ENCODE measurements at regions of chr19 and their contacts with region 1.

Region 1: DNA sequence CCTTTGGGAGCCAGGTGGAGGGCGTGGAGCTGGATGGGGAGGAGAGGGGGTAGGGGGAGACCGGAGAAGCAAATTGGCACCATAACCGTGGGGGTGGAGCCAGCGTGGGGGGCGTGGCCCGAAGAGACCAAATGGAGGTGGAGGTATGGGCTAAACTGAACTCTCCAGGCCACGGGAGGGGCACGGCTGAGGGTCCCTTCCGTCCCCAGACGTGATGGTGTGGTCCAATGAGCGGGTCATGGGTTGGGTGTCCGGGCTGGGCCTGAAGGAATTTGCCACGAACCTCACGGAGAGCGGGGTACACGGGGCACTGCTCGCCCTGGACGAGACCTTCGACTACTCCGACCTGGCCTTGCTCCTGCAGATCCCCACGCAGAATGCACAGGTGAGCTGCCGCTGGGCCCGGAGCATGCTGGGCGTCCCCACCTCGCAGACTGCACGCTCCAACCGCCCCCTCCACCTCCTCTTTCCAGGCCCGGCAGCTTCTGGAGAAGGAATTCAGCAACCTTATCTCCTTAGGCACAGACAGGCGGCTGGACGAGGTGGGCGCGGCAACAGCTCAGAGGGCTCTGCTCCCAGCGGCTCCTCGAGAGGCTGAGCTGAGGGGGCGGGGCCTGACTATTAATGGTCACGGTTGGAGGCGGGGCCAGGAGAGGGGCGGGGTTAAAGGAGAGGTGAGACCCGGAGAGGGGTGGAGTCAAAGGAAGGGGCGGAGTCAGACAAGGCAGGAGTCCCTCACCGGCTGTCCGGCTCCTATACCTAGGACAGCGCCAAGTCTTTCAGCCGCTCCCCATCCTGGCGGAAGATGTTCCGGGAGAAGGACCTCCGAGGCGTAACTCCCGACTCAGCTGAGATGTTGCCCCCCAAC is 6.2 kb downstream of the HRC start:
- H3K4me3 ChIP-seq: peak overlapping the region; percentile 69
- H3K27ac ChIP-seq: peak overlapping the region; percentile 70
- H3K4me1 ChIP-seq: peaks cover 6% of the 10 kb centered on the region
- CTCF ChIP-seq: no peak

Region 2: DNA sequence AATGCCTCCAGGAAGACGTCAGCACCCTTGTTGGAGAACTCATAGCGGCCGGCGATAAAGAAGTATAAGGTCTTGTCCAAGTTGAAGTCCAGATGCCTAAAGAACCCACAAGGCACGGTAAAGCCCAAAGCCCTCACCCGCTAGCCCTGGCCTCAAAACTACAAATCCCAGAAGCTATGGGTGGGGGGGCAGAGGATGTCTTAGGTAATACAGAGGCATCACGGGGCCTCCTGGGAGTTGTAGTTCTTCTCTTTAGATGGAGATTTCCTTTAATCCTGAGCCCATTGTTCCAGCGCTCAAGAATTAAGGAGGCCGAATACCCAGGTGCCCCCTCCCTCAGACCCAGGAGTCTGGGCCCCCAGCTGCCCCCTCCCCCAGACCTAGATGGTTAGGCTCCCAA is 166.7 kb before region 1 on chr19:
- CTCF ChIA-PET with region 1: no interaction called
- POLR2A ChIA-PET with region 1: no interaction called
- H3K4me3 ChIP-seq: no peak overlapping the region
- H3K27ac ChIP-seq: no peak overlapping the region
- H3K4me1 ChIP-seq: no peaks in the 10 kb centered on the region
- CTCF ChIP-seq: no peak

Region 3: DNA sequence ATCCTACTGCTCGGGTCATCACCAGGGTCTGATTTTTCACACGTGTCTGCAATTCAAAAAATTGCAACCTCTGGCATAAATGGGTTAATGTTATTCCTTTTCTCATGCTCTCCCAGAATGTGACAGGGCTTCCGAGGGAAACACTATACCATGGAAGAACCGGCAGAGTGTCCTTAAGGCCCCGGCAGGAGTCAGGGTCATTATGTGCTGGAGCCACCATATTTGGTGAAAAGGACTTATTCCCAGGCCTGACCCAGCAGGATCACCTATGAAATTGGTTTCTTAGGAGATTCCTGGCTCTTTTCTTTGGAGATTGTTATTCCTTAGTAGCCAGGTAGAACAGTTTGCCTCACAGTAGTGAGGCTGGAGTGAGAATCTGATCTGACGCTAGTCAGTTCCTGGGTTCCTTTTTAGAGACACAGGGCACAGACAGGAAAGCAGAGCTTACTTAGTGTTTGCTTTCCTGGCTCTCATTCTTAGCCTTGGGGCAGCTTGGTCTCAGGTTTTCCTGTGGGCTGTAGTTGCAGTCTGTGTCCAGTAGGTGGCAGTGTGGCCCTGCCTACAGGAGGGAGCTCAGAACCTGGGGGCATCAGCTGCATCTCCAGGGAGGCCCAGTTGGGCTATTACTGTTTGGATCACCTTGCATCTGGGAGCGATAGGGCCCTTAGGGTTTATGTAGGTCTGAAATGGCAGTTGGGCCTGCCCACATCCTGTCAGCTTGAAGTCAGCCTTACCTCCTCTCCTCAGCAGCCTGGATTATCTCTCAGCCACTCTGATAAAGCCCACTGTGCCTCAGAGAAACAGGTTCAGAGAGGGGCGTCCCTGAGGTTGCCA is 51.3 kb before region 1 on chr19:
- CTCF ChIA-PET with region 1: interaction called, 66 read pairs
- POLR2A ChIA-PET with region 1: interaction called, 11 read pairs
- H3K4me3 ChIP-seq: no peak overlapping the region
- H3K27ac ChIP-seq: peak overlapping the region; percentile 48
- H3K4me1 ChIP-seq: peaks cover 8% of the 10 kb centered on the region
- CTCF ChIP-seq: peak; percentile 94

Region 4: GRCh38 chr19:49113762-49114629 is 35.0 kb before region 1 on chr19 and contains the start of gene LIN7B:
- CTCF ChIA-PET with region 1: interaction called, 7 read pairs
- POLR2A ChIA-PET with region 1: interaction called, 22 read pairs
- H3K4me3 ChIP-seq: peak within 1 kb of the TSS; percentile 69
- H3K27ac ChIP-seq: peak within 1 kb of the TSS; percentile 84
- H3K4me1 ChIP-seq: peaks cover 14% of the 10 kb centered on the region
- CTCF ChIP-seq: peak; percentile 31; the same call in 1 of the 2 replicates

Region 5: DNA sequence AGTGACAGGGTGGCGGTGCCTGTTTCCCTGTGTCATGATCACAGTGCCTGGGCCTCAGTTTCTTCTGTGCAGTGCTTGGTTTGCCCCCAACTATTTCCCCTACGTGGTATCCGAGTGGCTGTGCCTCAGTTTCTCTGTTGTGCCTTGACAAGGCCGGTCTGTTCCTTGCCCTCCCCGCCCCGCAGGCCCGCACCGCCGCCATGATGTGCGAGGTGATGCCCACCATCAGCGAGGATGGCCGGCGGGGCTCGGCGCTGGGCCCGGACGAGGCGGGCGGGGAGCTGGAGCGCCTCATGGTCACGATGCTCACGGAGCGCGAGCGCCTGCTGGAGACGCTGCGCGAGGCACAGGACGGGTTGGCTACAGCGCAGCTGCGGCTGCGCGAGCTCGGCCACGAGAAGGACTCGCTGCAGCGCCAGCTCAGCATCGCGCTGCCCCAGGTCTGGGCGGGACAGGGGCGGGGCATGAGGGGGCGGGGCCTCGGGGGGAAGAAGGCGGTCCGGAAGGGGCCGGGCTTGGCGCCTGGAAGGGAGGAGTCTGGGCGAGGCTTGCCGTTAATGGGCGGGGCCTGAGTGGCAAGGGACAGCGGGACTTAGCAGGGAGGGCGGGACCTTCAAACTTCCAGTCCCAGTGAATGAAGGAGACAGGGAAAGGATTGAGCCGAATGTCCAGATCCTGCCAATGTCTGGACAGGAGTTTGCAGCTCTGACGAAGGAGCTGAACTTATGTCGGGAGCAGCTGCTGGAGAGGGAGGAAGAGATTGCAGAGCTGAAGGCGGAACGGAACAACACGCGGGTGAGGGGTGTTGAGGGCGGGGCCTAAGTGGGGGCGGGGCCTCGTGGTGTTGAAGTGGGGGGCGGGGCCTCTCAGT is 21.1 kb before region 1 on chr19:
- CTCF ChIA-PET with region 1: interaction called, 20 read pairs
- POLR2A ChIA-PET with region 1: interaction called, 27 read pairs
- H3K4me3 ChIP-seq: peak overlapping the region; percentile 53
- H3K27ac ChIP-seq: peak overlapping the region; percentile 60; the same call in 1 of the 2 replicates
- H3K4me1 ChIP-seq: peaks cover 7% of the 10 kb centered on the region
- CTCF ChIP-seq: peak; percentile 85

Region 6: GRCh38 chr19:49210108-49210900 is 61.3 kb after region 1 on chr19:
- CTCF ChIA-PET with region 1: interaction called, 11 read pairs
- POLR2A ChIA-PET with region 1: interaction called, 4 read pairs
- H3K4me3 ChIP-seq: no peak overlapping the region
- H3K27ac ChIP-seq: no peak overlapping the region
- H3K4me1 ChIP-seq: peaks cover 6% of the 10 kb centered on the region; the same call in 1 of the 2 replicates
- CTCF ChIP-seq: no peak

Region 7: DNA sequence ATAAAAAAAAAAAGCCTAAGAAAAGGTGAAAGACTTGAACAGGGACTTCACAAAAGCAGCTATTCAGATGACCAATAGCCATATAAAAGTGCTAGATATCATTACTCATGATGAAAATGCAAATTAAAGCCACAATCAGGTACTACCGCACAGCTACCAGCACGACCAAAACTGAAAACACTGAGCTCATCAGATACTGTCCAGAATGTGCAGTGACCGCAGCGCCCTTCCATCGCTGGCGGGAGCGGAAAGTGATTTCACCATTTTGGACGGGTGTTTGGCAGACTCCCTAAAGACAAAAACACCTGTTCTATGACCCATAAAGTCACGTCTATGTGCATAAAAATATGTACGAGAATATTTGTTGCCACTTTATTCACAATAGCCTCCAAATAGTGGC is 115.2 kb after region 1 on chr19:
- CTCF ChIA-PET with region 1: no interaction called
- POLR2A ChIA-PET with region 1: no interaction called
- H3K4me3 ChIP-seq: no peak overlapping the region
- H3K27ac ChIP-seq: no peak overlapping the region
- H3K4me1 ChIP-seq: no peaks in the 10 kb centered on the region
- CTCF ChIP-seq: no peak

Region 8: GRCh38 chr19:49324801-49325576 is 176.0 kb after region 1 on chr19 and contains the start of gene SLC6A16:
- CTCF ChIA-PET with region 1: no interaction called
- POLR2A ChIA-PET with region 1: no interaction called
- H3K4me3 ChIP-seq: no peak within 1 kb of the TSS
- H3K27ac ChIP-seq: no peak within 1 kb of the TSS
- H3K4me1 ChIP-seq: no peaks in the 10 kb centered on the region
- CTCF ChIP-seq: no peak

Measured in HEK293 (cell line).